Activated CD4-positive, alpha-beta memory T cell treated with anti-CD3 and anti-CD28 coated beads, Interleukin-2, amount 10 ng/mL, durations not matched to agents 7 days and 5 days (primary cell): ENCODE measurements at regions of chr6 and their contacts with region 1.

Region 1: DNA sequence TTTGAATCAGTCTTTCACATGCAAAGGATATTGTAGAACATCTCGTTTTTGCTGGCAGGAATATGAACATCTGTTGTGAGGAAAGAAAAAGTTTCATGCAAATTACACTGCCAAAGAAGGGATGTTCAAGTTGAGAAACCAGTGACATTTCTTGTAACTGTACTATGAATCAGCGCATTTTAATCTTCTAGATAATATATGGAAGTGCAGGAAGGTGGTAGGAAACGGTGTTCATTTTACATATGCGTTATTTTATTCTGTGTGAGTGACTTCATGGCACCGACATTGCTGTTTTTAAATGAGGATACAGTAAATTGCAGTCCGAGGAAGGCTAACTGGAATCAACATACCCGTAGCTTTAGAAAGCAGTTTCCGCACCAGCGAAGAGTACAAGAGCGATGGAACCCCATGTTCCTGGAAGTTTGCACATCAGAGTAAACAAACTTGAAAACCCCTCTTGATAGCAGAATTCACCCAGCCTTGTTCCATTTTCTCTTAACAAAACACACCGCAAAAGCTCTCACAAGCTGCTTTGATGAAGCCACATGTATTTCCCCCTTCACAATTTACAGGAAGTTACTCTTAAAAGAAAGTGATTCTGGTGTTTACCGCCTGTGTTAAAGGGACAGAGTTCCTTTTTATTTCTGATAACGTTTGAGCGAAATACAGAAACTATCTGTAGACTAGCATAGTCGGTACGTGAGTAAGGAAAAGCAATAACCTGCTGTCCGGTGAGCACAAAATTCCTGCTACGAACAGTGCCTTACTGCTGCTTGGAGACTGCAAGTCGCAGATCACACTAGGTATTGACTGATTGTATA is 11.5 kb downstream of the PRDM1 start:
- DNase-seq: peak; percentile 63
- H3K4me3 Mint-ChIP-seq: peak overlapping the region; percentile 87
- H3K27ac Mint-ChIP-seq: peak overlapping the region; percentile 97
- H3K4me1 Mint-ChIP-seq: peaks cover 70% of the 10 kb centered on the region
- H3K27me3 Mint-ChIP-seq: no peaks in the 10 kb centered on the region

Region 2: DNA sequence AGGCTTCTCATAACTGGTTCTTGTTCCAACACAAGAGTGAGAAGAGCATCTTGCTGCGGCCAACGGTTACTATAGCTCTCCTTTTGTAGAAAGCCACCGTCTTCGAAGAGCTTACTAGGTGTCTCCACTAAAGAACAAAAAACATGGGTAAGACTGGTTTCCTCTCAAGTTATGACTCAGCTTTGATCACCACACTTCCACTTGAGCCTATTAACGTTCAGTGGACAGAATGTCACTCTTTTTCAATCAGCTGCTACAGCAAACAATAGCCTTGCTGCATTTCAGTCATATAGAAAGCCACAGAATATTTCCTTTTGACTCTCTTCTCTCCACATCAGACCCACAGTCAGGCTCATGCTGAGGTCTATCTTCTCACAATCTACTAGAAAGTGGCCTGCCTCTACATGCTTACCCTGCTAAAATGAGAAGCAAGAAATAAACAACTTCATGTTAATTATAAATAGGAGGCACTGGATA is 451.2 kb before region 1 on chr6:
- CTCF ChIA-PET with region 1: no interaction called
- POLR2A ChIA-PET with region 1: interaction called, 18 read pairs
- DNase-seq: peak; percentile 77
- H3K4me3 Mint-ChIP-seq: peak overlapping the region; percentile 40
- H3K27ac Mint-ChIP-seq: peak overlapping the region; percentile 98
- H3K4me1 Mint-ChIP-seq: peaks cover 86% of the 10 kb centered on the region
- H3K27me3 Mint-ChIP-seq: no peaks in the 10 kb centered on the region

Region 3: GRCh38 chr6:105992315-105992961 is 105.2 kb before region 1 on chr6:
- CTCF ChIA-PET with region 1: interaction called, 19 read pairs
- POLR2A ChIA-PET with region 1: interaction called, 156 read pairs
- DNase-seq: peak; percentile 92
- H3K4me3 Mint-ChIP-seq: peak overlapping the region; percentile 87
- H3K27ac Mint-ChIP-seq: peak overlapping the region; percentile 74
- H3K4me1 Mint-ChIP-seq: peaks cover 70% of the 10 kb centered on the region
- H3K27me3 Mint-ChIP-seq: peaks cover 5% of the 10 kb centered on the region

Region 4: DNA sequence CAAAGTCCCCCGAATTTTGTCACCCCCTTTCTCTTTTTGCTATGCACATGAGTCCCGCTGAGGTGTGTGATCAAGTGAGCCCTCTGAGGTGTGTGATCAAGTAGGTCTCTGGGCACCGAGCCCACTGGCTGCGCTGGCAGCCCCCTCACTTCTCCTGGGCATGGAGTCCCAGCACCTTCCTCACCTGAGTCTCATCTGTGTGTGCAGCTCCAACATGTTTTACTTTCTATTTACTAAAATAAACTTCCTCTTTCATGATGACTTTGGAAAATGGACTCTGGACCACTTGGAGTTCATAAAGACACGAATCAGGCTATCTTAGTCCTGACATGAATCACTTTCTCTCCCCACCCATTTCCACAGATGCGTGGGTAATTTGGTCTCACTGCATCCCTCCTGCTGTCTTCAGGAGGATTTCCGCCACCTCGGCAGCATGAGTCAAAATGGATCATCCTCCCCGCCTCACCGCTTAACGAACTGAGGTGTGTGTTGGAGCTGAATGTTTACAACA is 28.4 kb after region 1 on chr6:
- CTCF ChIA-PET with region 1: no interaction called
- POLR2A ChIA-PET with region 1: interaction called, 27 read pairs
- DNase-seq: peak; percentile 81
- H3K4me3 Mint-ChIP-seq: peak overlapping the region; percentile 63
- H3K27ac Mint-ChIP-seq: peak overlapping the region; percentile 79
- H3K4me1 Mint-ChIP-seq: peaks cover 55% of the 10 kb centered on the region
- H3K27me3 Mint-ChIP-seq: peaks cover 2% of the 10 kb centered on the region

Region 5: GRCh38 chr6:106181664-106182418 is 84.2 kb after region 1 on chr6:
- CTCF ChIA-PET with region 1: no interaction called
- POLR2A ChIA-PET with region 1: interaction called, 121 read pairs
- DNase-seq: no peak
- H3K4me3 Mint-ChIP-seq: no peak overlapping the region
- H3K27ac Mint-ChIP-seq: peak overlapping the region; percentile 41
- H3K4me1 Mint-ChIP-seq: peaks cover 58% of the 10 kb centered on the region
- H3K27me3 Mint-ChIP-seq: peaks cover under 1% of the 10 kb centered on the region

Region 6: DNA sequence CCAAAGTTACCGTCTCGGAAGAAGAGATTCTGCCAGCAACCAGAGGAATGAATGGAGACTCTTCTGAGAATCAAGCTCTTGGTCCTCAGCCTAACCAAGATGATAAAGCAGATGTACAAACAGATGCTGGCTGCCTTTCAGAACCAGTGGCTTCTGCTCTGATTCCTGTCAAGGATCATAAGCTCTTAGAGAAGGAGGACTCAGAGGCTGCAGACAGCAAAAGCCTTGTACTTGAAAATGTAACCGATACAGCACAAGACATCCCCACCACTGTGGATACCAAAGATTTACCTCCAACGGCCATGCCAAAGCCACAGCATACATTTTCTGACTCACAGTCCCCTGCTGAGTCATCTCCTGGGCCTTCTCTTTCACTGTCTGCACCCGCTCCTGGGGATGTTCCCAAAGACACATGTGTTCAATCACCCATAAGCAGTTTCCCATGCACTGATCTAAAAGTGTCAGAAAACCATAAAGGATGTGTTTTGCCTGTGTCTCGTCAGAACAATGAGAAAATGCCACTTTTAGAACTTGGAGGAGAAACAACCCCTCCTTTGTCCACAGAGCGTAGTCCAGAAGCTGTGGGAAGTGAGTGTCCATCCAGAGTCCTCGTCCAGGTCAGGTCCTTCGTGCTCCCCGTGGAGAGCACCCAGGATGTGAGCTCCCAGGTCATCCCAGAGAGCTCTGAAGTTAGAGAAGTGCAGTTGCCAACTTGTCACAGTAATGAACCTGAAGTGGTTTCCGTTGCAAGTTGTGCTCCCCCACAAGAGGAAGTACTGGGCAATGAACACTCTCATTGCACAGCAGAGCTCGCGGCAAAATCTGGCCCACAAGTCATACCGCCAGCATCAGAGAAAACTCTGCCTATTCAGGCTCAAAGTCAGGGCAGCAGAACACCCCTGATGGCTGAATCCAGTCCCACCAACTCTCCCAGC is 422.1 kb after region 1 on chr6:
- CTCF ChIA-PET with region 1: no interaction called
- POLR2A ChIA-PET with region 1: interaction called, 29 read pairs
- DNase-seq: peak; percentile 89
- H3K4me3 Mint-ChIP-seq: peak overlapping the region; percentile 79
- H3K27ac Mint-ChIP-seq: peak overlapping the region; percentile 97
- H3K4me1 Mint-ChIP-seq: peaks cover 64% of the 10 kb centered on the region
- H3K27me3 Mint-ChIP-seq: no peaks in the 10 kb centered on the region